ENCODE measurements at regions of chr1 and their contacts with region 1.

Region 1: GRCh38 chr1:161749509-161750407 is at the start of gene DUSP12:
- DNase-seq: peak; percentile 93
- ATAC-seq: peak; percentile 98
- H3K4me3 ChIP-seq: peak within 1 kb of the TSS; percentile 59 to 94 (median 83)
- H3K4me3 Mint-ChIP-seq: peak within 1 kb of the TSS; percentile 100
- H3K27ac ChIP-seq: peak within 1 kb of the TSS; percentile 29 to 66
- H3K27ac Mint-ChIP-seq: peak within 1 kb of the TSS; percentile 97
- H3K4me1 ChIP-seq: peaks cover 18 to 27% of the 10 kb centered on the region in 2 donors
- H3K4me1 Mint-ChIP-seq: peaks cover 32% of the 10 kb centered on the region
- H3K27me3 ChIP-seq: no peaks in the 10 kb centered on the region
- H3K27me3 Mint-ChIP-seq: peaks cover 8% of the 10 kb centered on the region
- CTCF ChIP-seq: no peak
- total RNA-seq, gene DUSP12: 41.2 and 41.9 TPM in 2 replicates

Region 2: DNA sequence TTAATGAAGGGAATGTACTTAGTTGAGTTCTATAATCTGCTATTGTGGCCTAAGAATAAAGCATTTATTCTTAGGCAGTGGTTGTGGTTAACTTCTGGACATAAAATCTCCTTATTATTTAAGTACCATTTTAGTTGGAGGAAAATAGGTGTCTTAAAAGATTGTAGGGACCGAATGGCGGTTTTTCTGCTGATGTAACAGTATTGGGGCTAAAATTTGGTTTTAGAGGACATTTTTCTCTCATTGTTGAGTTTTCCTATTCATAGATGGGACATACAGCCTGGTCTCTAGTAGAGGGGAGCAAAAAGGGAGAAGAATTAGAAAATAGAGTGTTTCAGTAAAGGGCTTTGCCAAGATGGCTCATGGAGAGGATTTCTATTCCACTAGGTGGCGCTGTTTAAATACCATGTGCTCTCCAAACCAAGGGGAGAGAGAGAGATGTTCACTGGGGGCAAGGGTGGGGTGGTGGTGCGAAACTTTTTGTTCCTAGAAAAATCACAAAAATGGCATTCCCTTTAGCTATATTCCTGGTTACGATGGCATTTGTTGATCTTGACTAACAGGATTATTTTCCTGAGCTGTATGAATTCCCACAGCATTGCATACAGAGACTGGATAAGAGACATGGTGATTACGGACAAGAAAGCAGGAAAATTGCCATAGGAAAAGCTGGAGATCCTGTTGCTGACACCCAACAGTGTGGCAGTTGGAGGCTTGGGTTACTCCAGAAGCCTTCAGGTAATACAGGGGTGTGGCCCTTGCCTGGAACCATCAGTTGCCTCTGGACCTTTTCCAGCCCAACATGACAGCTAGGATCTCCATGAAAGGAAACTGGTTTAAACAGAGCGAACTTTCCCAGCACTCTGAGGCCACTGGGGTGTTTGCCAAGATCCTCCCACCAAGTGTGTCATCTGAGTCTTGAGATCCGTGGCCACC is 262.7 kb before region 1 on chr1:
- CTCF ChIA-PET with region 1: interaction called, 13 read pairs
- POLR2A ChIA-PET with region 1: no interaction called
- intact Hi-C with region 1: no loop called
- DNase-seq: peak; percentile 80
- ATAC-seq: peak; percentile 78
- H3K4me3 ChIP-seq: no peak overlapping the region
- H3K4me3 Mint-ChIP-seq: no peak overlapping the region
- H3K27ac ChIP-seq: no peak overlapping the region
- H3K27ac Mint-ChIP-seq: no peak overlapping the region
- H3K4me1 ChIP-seq: peaks cover 3 to 6% of the 10 kb centered on the region in 2 donors
- H3K4me1 Mint-ChIP-seq: peaks cover 8% of the 10 kb centered on the region
- H3K27me3 ChIP-seq: peaks cover 0 to 36% (median 7%) of the 10 kb centered on the region in 4 experiments
- H3K27me3 Mint-ChIP-seq: peaks cover 36% of the 10 kb centered on the region
- CTCF ChIP-seq: peak; percentile 82

Region 3: DNA sequence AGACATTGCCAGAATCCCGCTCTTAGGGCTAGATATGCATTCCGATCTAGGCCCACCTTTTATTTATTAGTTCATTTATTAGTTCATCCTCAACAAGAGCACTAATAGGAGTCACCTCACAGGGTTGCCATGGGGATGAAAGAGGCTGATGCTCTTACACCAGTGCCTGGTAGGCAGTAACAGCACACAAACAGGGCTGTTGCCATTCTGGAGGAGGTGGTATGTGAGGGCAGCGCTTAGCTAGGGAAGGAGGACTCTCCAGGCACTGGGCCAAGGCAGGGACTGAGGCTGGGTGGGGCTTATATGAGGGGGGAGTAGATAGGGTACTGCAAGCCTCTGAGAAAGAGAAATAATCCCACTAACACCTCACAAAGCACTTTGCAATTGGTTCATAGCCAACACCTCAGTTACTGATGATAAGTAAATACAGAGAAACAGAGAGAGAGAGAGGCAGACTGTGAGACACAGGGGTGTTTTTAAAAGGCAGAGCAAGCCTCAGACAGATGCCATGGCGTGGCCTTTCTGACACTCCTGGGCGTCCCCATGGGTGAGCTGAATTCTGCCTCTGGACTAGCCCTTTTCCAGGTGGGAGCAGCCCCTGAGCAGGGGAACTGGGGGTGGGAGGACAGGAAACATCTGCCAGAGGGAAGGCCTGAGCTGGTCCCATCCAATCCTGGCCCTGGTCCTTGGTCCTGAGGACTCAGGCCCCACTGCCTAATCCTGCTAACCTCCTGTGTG is 238.6 kb before region 1 on chr1:
- CTCF ChIA-PET with region 1: no interaction called
- POLR2A ChIA-PET with region 1: no interaction called
- intact Hi-C with region 1: no loop called
- DNase-seq: no peak
- ATAC-seq: no peak
- H3K4me3 ChIP-seq: no peak overlapping the region
- H3K4me3 Mint-ChIP-seq: no peak overlapping the region
- H3K27ac ChIP-seq: no peak overlapping the region
- H3K27ac Mint-ChIP-seq: no peak overlapping the region
- H3K4me1 ChIP-seq: peaks cover 0 to under 1% of the 10 kb centered on the region in 2 donors
- H3K4me1 Mint-ChIP-seq: peaks cover 4% of the 10 kb centered on the region
- H3K27me3 ChIP-seq: peaks cover 0 to 3% (median 0%) of the 10 kb centered on the region in 4 experiments
- H3K27me3 Mint-ChIP-seq: no peaks in the 10 kb centered on the region
- CTCF ChIP-seq: no peak

Region 4: DNA sequence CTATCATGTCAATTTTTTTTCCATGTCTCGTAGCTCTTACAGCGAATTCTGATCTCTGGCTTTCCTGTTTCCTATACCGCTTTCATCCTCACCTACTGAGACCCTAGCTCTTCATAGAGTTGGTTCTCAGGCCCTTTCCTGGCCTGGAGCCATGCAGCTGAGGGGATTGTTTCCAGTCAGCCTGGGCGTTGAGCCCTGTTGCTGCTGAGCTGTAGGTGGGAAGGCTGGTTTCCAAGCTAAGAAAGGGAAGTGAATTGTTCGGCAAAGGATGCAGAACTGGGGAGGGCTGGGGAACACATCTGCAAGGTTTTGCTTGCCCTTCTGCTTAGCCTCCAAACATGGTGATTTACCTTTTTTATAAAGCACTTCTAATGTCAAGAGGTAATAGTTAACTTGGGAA is 585.4 kb after region 1 on chr1:
- CTCF ChIA-PET with region 1: no interaction called
- POLR2A ChIA-PET with region 1: no interaction called
- intact Hi-C with region 1: no loop called
- DNase-seq: no peak
- ATAC-seq: no peak
- H3K4me3 ChIP-seq: no peak overlapping the region
- H3K4me3 Mint-ChIP-seq: no peak overlapping the region
- H3K27ac ChIP-seq: no peak overlapping the region
- H3K27ac Mint-ChIP-seq: no peak overlapping the region
- H3K4me1 ChIP-seq: no peaks in the 10 kb centered on the region
- H3K4me1 Mint-ChIP-seq: no peaks in the 10 kb centered on the region
- H3K27me3 ChIP-seq: peaks cover 0 to 5% (median 0%) of the 10 kb centered on the region in 4 experiments
- H3K27me3 Mint-ChIP-seq: peaks cover 39% of the 10 kb centered on the region
- CTCF ChIP-seq: no peak